IMR-90 (cell line): ENCODE measurements at regions of chr11 and their contacts with region 1.

Region 1: GRCh38 chr11:100930185-100930778 is 199.3 kb downstream of the PGR start:
- DNase-seq: peak; percentile 81
- ATAC-seq: peak; percentile 68
- H3K4me3 ChIP-seq: no peak overlapping the region
- H3K27ac ChIP-seq: peak overlapping the region; percentile 43; the same call in 1 of the 2 replicates
- H3K4me1 ChIP-seq: peaks cover 10% of the 10 kb centered on the region
- H3K27me3 ChIP-seq: no peaks in the 10 kb centered on the region
- CTCF ChIP-seq: peak; percentile 76
- POLR2A ChIP-seq: no peak
- RAD21 ChIP-seq: peak; percentile 69

Region 2: GRCh38 chr11:99505316-99505715 is 1425.0 kb before region 1 on chr11:
- CTCF ChIA-PET with region 1: no interaction called
- POLR2A ChIA-PET with region 1: no interaction called
- dilution Hi-C with region 1: no loop called
- in situ Hi-C with region 1: loop called (anchors 25 kb)
- intact Hi-C with region 1: no loop called
- DNase-seq: peak; percentile 86
- ATAC-seq: peak; percentile 89
- H3K4me3 ChIP-seq: no peak overlapping the region
- H3K27ac ChIP-seq: peak overlapping the region; percentile 37; the same call in 1 of the 2 replicates
- H3K4me1 ChIP-seq: peaks cover 4% of the 10 kb centered on the region
- H3K27me3 ChIP-seq: no peaks in the 10 kb centered on the region
- CTCF ChIP-seq: no peak
- POLR2A ChIP-seq: no peak
- RAD21 ChIP-seq: no peak

Region 3: GRCh38 chr11:100575870-100576705 is 354.2 kb before region 1 on chr11:
- CTCF ChIA-PET with region 1: interaction called, 8 read pairs
- POLR2A ChIA-PET with region 1: no interaction called
- dilution Hi-C with region 1: no loop called
- in situ Hi-C with region 1: loop called (anchors 5 kb)
- intact Hi-C with region 1: loop called (anchors 1 kb)
- DNase-seq: peak; percentile 73
- ATAC-seq: peak; percentile 79
- H3K4me3 ChIP-seq: no peak overlapping the region
- H3K27ac ChIP-seq: no peak overlapping the region
- H3K4me1 ChIP-seq: peaks cover 4% of the 10 kb centered on the region
- H3K27me3 ChIP-seq: no peaks in the 10 kb centered on the region
- CTCF ChIP-seq: peak; percentile 93
- POLR2A ChIP-seq: no peak
- RAD21 ChIP-seq: peak; percentile 98

Region 4: GRCh38 chr11:100682247-100682969 is 247.9 kb before region 1 on chr11:
- CTCF ChIA-PET with region 1: interaction called, 4 read pairs
- POLR2A ChIA-PET with region 1: no interaction called
- dilution Hi-C with region 1: no loop called
- in situ Hi-C with region 1: loop called (anchors 5 kb)
- intact Hi-C with region 1: loop called (anchors 1 kb)
- DNase-seq: peak; percentile 46
- ATAC-seq: no peak
- H3K4me3 ChIP-seq: no peak overlapping the region
- H3K27ac ChIP-seq: no peak overlapping the region
- H3K4me1 ChIP-seq: peaks cover 2% of the 10 kb centered on the region; the same call in 1 of the 2 replicates
- H3K27me3 ChIP-seq: no peaks in the 10 kb centered on the region
- CTCF ChIP-seq: peak; percentile 62
- POLR2A ChIP-seq: no peak
- RAD21 ChIP-seq: peak; percentile 64

Region 5: GRCh38 chr11:100855466-100856067 is 74.7 kb before region 1 on chr11:
- CTCF ChIA-PET with region 1: no interaction called
- POLR2A ChIA-PET with region 1: no interaction called
- dilution Hi-C with region 1: no loop called
- in situ Hi-C with region 1: loop called (anchors 5 kb)
- intact Hi-C with region 1: loop called (anchors 1 kb)
- DNase-seq: peak; percentile 68
- ATAC-seq: peak; percentile 54
- H3K4me3 ChIP-seq: no peak overlapping the region
- H3K27ac ChIP-seq: no peak overlapping the region
- H3K4me1 ChIP-seq: peaks cover 2% of the 10 kb centered on the region
- H3K27me3 ChIP-seq: no peaks in the 10 kb centered on the region
- CTCF ChIP-seq: peak; percentile 71
- POLR2A ChIP-seq: no peak
- RAD21 ChIP-seq: peak; percentile 71

Region 6: DNA sequence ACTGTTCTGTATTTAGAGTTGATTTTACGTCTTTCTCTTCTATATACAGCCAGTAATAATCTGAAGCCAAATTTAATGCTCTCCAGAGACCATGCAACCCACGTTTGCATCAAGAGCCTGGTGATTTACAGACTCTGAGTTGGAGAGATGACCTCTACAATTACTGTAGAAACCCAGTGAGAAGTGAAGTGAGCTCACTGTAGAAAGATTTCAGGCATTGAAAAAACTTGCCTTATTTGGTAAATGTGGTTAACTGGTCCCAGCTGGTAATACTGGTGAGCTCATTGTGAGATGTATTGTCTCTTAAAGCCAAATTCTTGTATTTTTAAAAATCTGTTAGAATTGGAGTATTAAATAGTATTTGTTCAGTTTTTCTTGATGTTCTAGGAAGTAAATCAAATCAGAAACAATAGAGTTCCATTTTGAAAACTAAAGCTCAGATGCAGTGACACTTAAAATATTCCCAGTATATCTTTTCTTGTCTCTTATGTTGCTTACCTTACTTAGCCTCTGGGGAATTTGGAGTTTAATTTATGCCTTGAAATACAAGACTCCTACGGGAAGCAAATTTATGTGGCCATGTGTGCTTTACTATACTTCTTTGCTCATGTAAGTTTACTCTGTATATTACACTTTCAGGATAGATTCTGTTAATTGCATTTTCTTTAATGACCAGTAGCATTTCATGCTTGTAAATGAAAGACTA is 53.3 kb before region 1 on chr11:
- CTCF ChIA-PET with region 1: interaction called, 5 read pairs
- POLR2A ChIA-PET with region 1: no interaction called
- dilution Hi-C with region 1: no loop called
- in situ Hi-C with region 1: no loop called
- intact Hi-C with region 1: loop called (anchors 5 kb)
- DNase-seq: peak; percentile 98
- ATAC-seq: peak; percentile 94
- H3K4me3 ChIP-seq: no peak overlapping the region
- H3K27ac ChIP-seq: peak overlapping the region; percentile 100; the same call in 1 of the 2 replicates
- H3K4me1 ChIP-seq: peaks cover 19% of the 10 kb centered on the region
- H3K27me3 ChIP-seq: no peaks in the 10 kb centered on the region
- CTCF ChIP-seq: no peak
- POLR2A ChIP-seq: 0 out of 2 replicates have a peak, but pooled peaks have one; percentile 46
- RAD21 ChIP-seq: no peak